Activated CD4-positive, alpha-beta T cell treated with anti-CD3 and anti-CD28 coated beads, Interleukin-2, amount 10 ng/mL, durations not matched to agents 7 days and 5 days (primary cell): ENCODE measurements at regions of chr16 and their contacts with region 1.

Region 1: GRCh38 chr16:11597239-11598101 is 10.8 kb upstream of the LITAF start:
- DNase-seq: no peak
- H3K4me3 Mint-ChIP-seq: no peak overlapping the region
- H3K27ac Mint-ChIP-seq: peak overlapping the region; percentile 4
- H3K4me1 Mint-ChIP-seq: peaks cover 24% of the 10 kb centered on the region
- H3K27me3 Mint-ChIP-seq: peaks cover 2% of the 10 kb centered on the region

Region 2: GRCh38 chr16:11583889-11584565 is 13.4 kb before region 1 on chr16:
- CTCF ChIA-PET with region 1: interaction called, 10 read pairs
- POLR2A ChIA-PET with region 1: no interaction called
- DNase-seq: peak; percentile 32
- H3K4me3 Mint-ChIP-seq: peak overlapping the region; percentile 92
- H3K27ac Mint-ChIP-seq: peak overlapping the region; percentile 87
- H3K4me1 Mint-ChIP-seq: peaks cover 67% of the 10 kb centered on the region
- H3K27me3 Mint-ChIP-seq: peaks cover 2% of the 10 kb centered on the region